ENCODE measurements at regions of chr22 and their contacts with region 1.

Region 1: GRCh38 chr22:28772633-28773460 is at the start of gene CCDC117:
- DNase-seq: peak; percentile 86 to 97
- H3K4me3 ChIP-seq: peak within 1 kb of the TSS; percentile 90
- H3K27ac ChIP-seq: peak within 1 kb of the TSS; percentile 95 to 98
- H3K4me1 ChIP-seq: peaks cover 3 to 10% of the 10 kb centered on the region in 2 donors
- H3K27me3 ChIP-seq: no peaks in the 10 kb centered on the region
- CTCF ChIP-seq: peak in 1 of 3 experiments; percentile 81
- total RNA-seq, gene CCDC117: 10.7 TPM

Region 2: DNA sequence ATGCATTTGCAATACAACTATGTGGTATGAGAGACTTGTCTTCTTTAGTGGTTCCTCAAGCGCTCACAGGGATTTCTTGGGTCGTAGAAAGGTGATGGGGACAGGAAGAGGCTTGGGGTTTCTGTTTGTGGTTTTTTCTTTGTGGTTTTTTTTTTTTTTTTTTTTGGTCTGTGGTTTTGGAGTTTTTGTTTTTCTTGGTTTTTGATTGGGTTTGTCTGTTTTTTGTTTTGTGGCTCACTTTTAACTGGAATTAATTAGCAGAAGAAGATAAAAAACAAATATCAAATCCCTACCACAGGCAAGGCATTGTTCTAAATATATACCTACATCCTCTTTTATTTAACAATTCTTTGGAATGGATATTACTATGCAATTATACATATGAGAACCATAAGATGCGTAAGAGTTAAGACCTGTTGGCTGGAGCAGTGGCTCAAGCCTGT is 98.7 kb before region 1 on chr22:
- intact Hi-C with region 1: loop called (anchors 10 kb)
- DNase-seq: no peak
- H3K4me3 ChIP-seq: no peak overlapping the region
- H3K27ac ChIP-seq: no peak overlapping the region
- H3K4me1 ChIP-seq: peaks cover 0 to 3% of the 10 kb centered on the region in 2 donors
- H3K27me3 ChIP-seq: no peaks in the 10 kb centered on the region
- CTCF ChIP-seq: no peak

Region 3: DNA sequence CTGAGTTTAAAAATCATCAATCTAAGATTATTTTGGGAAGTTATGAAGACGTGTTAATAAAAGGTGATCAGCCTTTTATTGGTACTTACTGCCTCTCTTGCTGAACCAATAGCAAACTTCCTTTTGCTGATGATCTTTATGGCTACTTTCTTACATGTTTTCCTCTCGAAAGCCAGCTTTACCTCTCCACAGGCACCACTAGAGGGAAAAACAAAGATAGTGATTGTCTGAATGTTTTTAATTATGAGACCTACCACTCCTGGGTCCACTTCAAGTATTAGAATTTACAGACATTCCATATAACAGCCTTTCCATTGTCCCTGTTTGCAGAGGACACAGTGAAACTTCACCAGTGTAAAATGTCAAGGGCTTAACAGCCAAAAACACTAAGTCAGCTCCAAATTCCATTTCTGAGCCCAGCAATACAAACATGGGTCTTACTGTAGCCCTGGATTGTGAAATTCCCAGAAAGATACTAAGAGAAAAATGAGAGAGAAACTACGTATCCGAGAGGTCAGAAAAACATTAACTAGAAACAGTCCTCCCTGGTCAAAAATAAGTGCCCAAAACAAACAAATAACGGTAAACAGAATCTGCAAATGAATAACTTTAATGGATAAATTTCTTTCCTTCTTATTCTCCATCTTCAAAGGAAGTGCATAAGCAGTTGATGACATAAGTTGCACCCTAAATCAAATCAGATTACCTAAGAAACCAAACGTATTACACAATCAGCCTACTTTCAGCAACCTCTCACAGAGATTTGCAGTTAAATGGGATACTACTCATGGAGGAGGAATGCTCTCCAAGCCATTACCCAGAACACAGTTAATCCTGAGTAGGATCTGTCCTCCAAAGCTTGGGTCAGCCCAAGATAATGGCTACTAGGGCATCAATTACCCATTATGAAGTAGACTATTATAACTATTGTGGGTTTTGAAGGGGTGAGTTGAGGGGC is 60.7 kb before region 1 on chr22:
- intact Hi-C with region 1: loop called (anchors 1 kb)
- DNase-seq: no peak
- H3K4me3 ChIP-seq: peak overlapping the region; percentile 34 to 36
- H3K27ac ChIP-seq: peak overlapping the region; percentile 52 to 75
- H3K4me1 ChIP-seq: peaks cover 0 to 2% of the 10 kb centered on the region in 2 donors
- H3K27me3 ChIP-seq: no peaks in the 10 kb centered on the region
- CTCF ChIP-seq: no peak

Region 4: GRCh38 chr22:28741758-28742561 is 30.9 kb before region 1 on chr22 and contains the starts of genes CHEK2 and HSCB:
- intact Hi-C with region 1: loop called (anchors 1 kb)
- DNase-seq: peak; percentile 96 to 99
- H3K4me3 ChIP-seq: peak within 1 kb of the TSS; percentile 65 to 98
- H3K27ac ChIP-seq: peak within 1 kb of the TSS; percentile 98 to 100
- H3K4me1 ChIP-seq: peaks cover 0 to 8% of the 10 kb centered on the region in 2 donors
- H3K27me3 ChIP-seq: no peaks in the 10 kb centered on the region
- CTCF ChIP-seq: no peak
- total RNA-seq, gene CHEK2: 1.3 TPM
- total RNA-seq, gene HSCB: 0.85 TPM

Region 5: GRCh38 chr22:28791841-28792490 is 19.1 kb after region 1 on chr22:
- intact Hi-C with region 1: no loop called
- DNase-seq: no peak
- H3K4me3 ChIP-seq: no peak overlapping the region
- H3K27ac ChIP-seq: no peak overlapping the region
- H3K4me1 ChIP-seq: peaks cover 4 to 8% of the 10 kb centered on the region in 2 donors
- H3K27me3 ChIP-seq: no peaks in the 10 kb centered on the region
- CTCF ChIP-seq: no peak

Region 6: DNA sequence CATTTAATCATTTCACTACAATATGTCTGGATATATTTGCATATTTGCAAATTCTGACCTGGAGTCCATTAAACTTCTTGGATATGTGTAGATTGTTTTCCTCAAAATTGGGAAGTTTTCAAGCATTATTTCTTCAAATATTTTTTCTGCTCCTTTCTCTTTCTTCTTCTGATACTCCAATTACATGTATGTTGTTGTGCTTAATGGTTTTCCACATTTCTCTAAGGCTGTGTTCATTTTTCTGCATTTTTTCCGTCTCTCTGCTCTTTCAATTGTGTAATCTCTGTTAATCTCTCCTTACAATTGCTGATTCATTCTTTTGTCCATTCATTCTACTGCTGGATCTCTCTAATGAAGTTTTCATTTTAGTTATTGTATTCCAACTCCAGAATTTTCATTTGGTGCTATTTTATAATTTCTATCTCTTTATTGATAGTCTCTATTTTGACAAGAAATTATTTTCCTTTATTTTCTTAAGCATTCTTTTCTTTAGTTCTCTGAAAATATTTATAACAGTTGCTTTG is 402.5 kb after region 1 on chr22:
- intact Hi-C with region 1: no loop called
- DNase-seq: no peak
- H3K4me3 ChIP-seq: no peak overlapping the region
- H3K27ac ChIP-seq: no peak overlapping the region
- H3K4me1 ChIP-seq: no peaks in the 10 kb centered on the region
- H3K27me3 ChIP-seq: no peaks in the 10 kb centered on the region
- CTCF ChIP-seq: no peak